SK-N-SH (cell line): ENCODE measurements at regions of chr2 and their contacts with region 1.

Region 1: DNA sequence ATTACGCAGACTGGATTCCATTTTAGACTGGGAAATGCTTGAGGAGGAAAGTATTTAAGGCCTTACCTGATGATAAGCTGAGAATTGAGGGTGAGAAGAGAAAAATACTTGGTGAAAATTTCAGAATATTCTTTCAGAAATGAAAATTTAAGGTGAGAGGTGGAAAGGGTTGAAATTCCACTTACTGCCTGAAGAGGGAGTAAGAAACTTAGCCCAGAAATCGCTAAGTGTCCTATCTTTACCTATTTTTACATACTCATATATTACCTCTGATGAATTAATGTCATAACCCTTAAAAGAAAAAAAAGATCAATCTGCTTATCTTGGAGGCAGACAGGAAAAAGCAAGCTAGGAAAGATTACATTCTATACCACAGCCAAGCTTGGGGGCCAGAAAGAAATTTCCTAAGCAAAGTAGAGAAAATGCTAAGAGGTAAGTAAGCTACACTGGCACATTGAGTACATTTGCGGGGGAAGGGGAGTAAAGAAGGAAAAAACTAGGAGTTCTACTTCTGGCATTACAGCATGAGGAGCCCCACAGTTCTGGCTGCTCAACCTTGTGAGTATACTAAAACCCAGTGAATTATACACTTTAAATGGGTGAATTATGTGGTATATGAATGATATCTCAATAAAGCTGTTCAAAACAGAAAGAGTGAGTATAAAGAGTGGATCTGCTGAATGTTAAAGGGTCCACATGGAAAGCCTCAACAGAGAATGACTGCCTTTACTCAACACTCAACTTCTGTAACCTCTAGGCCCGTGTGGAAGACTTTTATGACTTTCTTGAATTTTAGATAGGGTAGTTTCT is 33.8 kb downstream of the SMC6 start:
- DNase-seq: peak; percentile 24
- H3K4me3 ChIP-seq: no peak overlapping the region; a peak in 1 of 4 replicates
- H3K27ac ChIP-seq: 0 out of 4 replicates have a peak overlapping the region, but pooled peaks of 1 of the 2 experiments have one; percentile 5
- H3K4me1 ChIP-seq: no peaks in the 10 kb centered on the region
- H3K27me3 ChIP-seq: no peaks in the 10 kb centered on the region
- CTCF ChIP-seq: peak; percentile 94
- EP300 ChIP-seq: no peak
- RAD21 ChIP-seq: peak; percentile 82

Region 2: GRCh38 chr2:17416884-17417391 is 302.8 kb before region 1 on chr2:
- CTCF ChIA-PET with region 1: no interaction called
- POLR2A ChIA-PET with region 1: no interaction called
- DNase-seq: no peak
- H3K4me3 ChIP-seq: no peak overlapping the region
- H3K27ac ChIP-seq: peak overlapping the region in 1 of 2 experiments; percentile 17; a peak in 1 of 4 replicates
- H3K4me1 ChIP-seq: no peaks in the 10 kb centered on the region
- H3K27me3 ChIP-seq: no peaks in the 10 kb centered on the region
- CTCF ChIP-seq: no peak
- EP300 ChIP-seq: no peak
- RAD21 ChIP-seq: no peak

Region 3: DNA sequence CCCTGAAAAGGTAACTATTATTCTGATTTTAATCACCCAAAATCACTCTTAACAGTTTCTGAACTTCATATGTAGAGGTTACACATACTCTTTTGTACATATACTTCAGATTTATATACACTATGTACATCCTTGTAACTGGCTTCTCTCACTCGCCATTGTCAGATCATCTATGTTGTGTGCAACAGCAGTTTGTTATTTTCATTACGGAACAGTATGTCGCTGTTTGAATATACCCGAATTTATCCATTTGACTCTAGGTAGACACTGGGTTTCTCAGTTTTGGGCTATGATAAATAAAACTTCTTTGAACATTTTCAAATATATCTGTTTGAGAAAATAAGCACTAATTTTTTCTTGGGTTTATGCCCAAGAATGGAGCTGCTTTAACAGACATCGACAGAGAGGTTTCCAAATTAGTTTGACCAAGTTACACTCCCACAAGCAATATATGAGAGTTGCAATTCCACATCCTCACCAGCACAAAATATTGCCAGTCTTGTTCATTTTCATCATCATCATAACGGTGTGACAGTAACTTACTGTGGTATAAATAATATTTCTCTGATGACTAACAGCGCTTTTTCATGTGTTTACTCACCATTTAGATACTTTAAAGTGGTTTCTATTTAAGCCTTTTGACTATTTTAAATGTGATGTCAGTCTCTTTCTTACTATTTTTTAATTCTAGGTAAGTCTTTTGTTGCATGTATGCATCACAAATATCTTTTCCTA is 47.0 kb before region 1 on chr2:
- CTCF ChIA-PET with region 1: interaction called, 12 read pairs
- POLR2A ChIA-PET with region 1: no interaction called
- DNase-seq: no peak
- H3K4me3 ChIP-seq: no peak overlapping the region
- H3K27ac ChIP-seq: peak overlapping the region in 1 of 2 experiments; percentile 59; a peak in 3 of 4 replicates
- H3K4me1 ChIP-seq: peaks cover 5 to 10% of the 10 kb centered on the region in 2 experiments; a peak in 1 of 4 replicates
- H3K27me3 ChIP-seq: no peaks in the 10 kb centered on the region
- CTCF ChIP-seq: 0 out of 2 replicates have a peak, but pooled peaks have one; percentile 28
- EP300 ChIP-seq: no peak
- RAD21 ChIP-seq: no peak

Region 4: DNA sequence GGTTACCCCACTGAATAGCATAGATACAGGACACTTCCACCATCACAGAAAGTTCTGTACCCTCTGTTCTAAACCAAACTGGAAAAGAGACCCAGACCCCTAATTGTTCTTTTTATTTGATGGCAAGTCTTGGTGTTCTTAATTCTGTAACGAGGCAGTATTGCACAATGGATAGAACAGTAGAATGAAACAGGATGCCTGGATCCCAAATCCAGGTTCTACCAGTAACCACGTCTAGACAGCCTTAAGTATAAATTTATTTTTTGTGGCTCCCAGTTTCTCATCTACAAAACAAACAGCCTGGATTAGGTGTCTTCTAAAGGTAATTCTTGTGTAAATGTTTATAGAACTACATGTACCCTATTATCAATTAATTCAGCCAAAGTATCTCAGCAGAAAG is 10.1 kb after region 1 on chr2:
- CTCF ChIA-PET with region 1: interaction called, 42 read pairs
- POLR2A ChIA-PET with region 1: no interaction called
- DNase-seq: no peak
- H3K4me3 ChIP-seq: no peak overlapping the region
- H3K27ac ChIP-seq: no peak overlapping the region
- H3K4me1 ChIP-seq: peaks cover 0 to 2% of the 10 kb centered on the region in 2 experiments; a peak in 2 of 4 replicates
- H3K27me3 ChIP-seq: no peaks in the 10 kb centered on the region
- CTCF ChIP-seq: no peak
- EP300 ChIP-seq: no peak
- RAD21 ChIP-seq: no peak

Region 5: GRCh38 chr2:17747684-17748452 is 28.1 kb after region 1 on chr2:
- CTCF ChIA-PET with region 1: interaction called, 21 read pairs
- POLR2A ChIA-PET with region 1: no interaction called
- DNase-seq: no peak
- H3K4me3 ChIP-seq: no peak overlapping the region
- H3K27ac ChIP-seq: peak overlapping the region in 1 of 2 experiments; percentile 1; a peak in 1 of 4 replicates
- H3K4me1 ChIP-seq: peaks cover 0 to 7% of the 10 kb centered on the region in 2 experiments; a peak in 3 of 4 replicates
- H3K27me3 ChIP-seq: no peaks in the 10 kb centered on the region
- CTCF ChIP-seq: no peak
- EP300 ChIP-seq: no peak
- RAD21 ChIP-seq: no peak

Region 6: GRCh38 chr2:17780546-17780945 is 60.8 kb after region 1 on chr2:
- CTCF ChIA-PET with region 1: interaction called, 12 read pairs
- POLR2A ChIA-PET with region 1: no interaction called
- DNase-seq: no peak
- H3K4me3 ChIP-seq: no peak overlapping the region
- H3K27ac ChIP-seq: no peak overlapping the region
- H3K4me1 ChIP-seq: no peaks in the 10 kb centered on the region
- H3K27me3 ChIP-seq: no peaks in the 10 kb centered on the region
- CTCF ChIP-seq: no peak
- EP300 ChIP-seq: no peak
- RAD21 ChIP-seq: no peak

Region 7: DNA sequence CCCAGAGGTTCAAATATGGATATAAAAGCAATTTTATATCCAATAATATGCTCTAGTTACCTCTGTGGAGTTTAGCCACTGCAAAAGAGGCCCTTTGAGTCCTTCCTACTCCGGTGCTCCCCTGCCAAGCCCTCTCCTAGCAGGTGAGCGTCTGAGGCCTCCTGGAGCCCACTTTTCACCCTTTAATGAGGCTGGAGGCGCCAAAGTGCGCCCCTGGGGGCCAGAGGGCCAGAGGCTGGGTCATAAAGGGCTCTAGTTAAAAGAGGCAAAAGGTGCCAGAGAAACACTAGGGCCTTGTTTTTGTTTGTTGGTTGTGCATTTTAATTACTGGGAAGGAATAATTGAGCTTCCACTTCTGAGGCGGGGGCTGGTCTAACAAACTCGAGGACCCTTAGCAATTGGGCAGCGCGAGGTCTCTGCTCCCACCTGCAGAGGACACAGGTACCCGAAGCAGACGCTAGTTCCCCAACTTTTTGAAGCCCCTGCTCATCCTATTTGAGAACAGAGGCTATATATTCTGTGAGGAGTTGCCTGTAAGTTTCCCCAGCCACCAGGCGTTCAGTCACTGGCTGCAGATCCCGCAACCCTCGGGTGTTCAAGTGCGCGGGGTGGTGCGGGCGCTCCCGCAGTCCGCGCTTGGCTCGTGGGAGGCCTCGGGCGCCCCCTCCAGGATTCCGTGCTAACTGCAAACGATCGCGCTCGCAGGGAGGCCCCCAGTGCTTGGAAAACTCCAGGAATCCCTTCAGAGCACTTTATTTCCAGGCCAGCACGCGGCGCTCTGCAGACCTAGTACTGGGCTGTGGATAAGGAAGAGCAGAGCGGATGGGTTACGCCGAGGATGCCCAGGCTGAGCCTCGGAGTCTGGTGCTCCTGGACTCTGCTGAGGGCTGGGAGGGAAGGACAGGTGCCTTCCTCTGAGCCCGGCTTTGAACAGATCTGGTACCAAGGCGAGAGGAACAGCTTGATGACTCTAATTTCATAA is 110.6 kb after region 1 on chr2:
- CTCF ChIA-PET with region 1: interaction called, 72 read pairs
- POLR2A ChIA-PET with region 1: no interaction called
- DNase-seq: peak; percentile 92
- H3K4me3 ChIP-seq: peak overlapping the region; percentile 43 to 59
- H3K27ac ChIP-seq: no peak overlapping the region
- H3K4me1 ChIP-seq: peaks cover 0 to 10% of the 10 kb centered on the region in 2 experiments; a peak in 1 of 4 replicates
- H3K27me3 ChIP-seq: peaks cover 11% of the 10 kb centered on the region; the same call in 1 of the 2 replicates
- CTCF ChIP-seq: peak; percentile 94
- EP300 ChIP-seq: no peak
- RAD21 ChIP-seq: peak; percentile 79

Region 8: GRCh38 chr2:19120941-19121750 is 1401.4 kb after region 1 on chr2:
- CTCF ChIA-PET with region 1: no interaction called
- POLR2A ChIA-PET with region 1: no interaction called
- DNase-seq: no peak
- H3K4me3 ChIP-seq: 0 out of 4 replicates have a peak overlapping the region, but pooled peaks of 1 of the 2 experiments have one; percentile 4
- H3K27ac ChIP-seq: peak overlapping the region; percentile 18 to 71; a peak in 3 of 4 replicates
- H3K4me1 ChIP-seq: peaks cover 0 to 39% of the 10 kb centered on the region in 2 experiments; a peak in 3 of 4 replicates
- H3K27me3 ChIP-seq: no peaks in the 10 kb centered on the region
- CTCF ChIP-seq: no peak
- EP300 ChIP-seq: peak in 1 of 2 experiments; percentile 92; a peak in 2 of 4 replicates
- RAD21 ChIP-seq: no peak

Region 9: GRCh38 chr2:19632403-19632991 is 1912.7 kb after region 1 on chr2:
- CTCF ChIA-PET with region 1: no interaction called
- POLR2A ChIA-PET with region 1: no interaction called
- DNase-seq: no peak
- H3K4me3 ChIP-seq: no peak overlapping the region
- H3K27ac ChIP-seq: no peak overlapping the region
- H3K4me1 ChIP-seq: no peaks in the 10 kb centered on the region
- H3K27me3 ChIP-seq: peaks cover 39% of the 10 kb centered on the region; the same call in 1 of the 2 replicates
- CTCF ChIP-seq: no peak
- EP300 ChIP-seq: no peak
- RAD21 ChIP-seq: no peak